ENCODE measurements at regions of chr1 and their contacts with region 1.

Region 1: DNA sequence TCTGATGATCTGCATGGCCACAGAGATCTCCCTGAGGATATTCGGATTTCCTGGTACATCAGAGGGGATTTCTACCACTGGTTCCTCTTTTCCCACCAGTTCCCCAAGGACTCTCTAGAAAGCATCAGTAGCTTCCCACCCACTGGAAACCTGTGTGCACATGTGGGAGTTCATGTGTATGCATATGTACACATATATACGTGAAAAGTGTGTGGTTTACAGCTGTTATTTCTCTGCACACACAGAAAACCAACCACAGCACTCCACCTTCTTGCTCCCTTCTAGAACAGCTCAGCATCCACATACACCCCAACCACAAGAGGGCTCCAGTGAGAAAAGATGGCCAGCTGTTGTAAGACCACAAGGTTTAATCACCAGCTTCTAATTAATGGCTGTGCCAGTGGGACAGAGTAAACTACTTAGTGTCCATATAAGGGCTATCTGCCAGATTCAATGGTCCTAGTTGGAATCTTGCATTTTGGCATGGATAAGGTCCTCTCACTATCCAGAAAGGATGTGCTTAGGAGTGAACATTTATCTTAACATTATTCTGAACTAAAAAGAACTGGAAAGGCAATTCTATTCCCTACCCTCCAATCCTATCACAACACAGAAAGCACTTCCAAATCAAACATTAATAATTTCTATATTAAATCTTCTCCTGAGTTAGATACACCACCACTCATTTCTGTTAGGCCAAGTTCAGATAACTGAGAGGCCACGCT is 24.1 kb downstream of the GPR3 start:
- DNase-seq: no peak
- H3K4me3 ChIP-seq: no peak overlapping the region
- H3K27me3 ChIP-seq: no peaks in the 10 kb centered on the region
- CTCF ChIP-seq: peak; percentile 80

Region 2: GRCh38 chr1:27220096-27220495 is 196.5 kb before region 1 on chr1:
- CTCF ChIA-PET with region 1: no interaction called
- POLR2A ChIA-PET with region 1: no interaction called
- DNase-seq: no peak
- H3K4me3 ChIP-seq: no peak overlapping the region
- H3K27me3 ChIP-seq: no peaks in the 10 kb centered on the region
- CTCF ChIP-seq: no peak

Region 3: GRCh38 chr1:27341525-27342252 is 74.9 kb before region 1 on chr1 and contains the start of gene SYTL1:
- CTCF ChIA-PET with region 1: no interaction called
- POLR2A ChIA-PET with region 1: no interaction called
- DNase-seq: no peak
- H3K4me3 ChIP-seq: no peak within 1 kb of the TSS
- H3K27me3 ChIP-seq: no peaks in the 10 kb centered on the region
- CTCF ChIP-seq: no peak
- polyA plus RNA-seq, gene SYTL1: 0.20 and 0.23 TPM in 2 replicates

Region 4: GRCh38 chr1:27357281-27358037 is 59.1 kb before region 1 on chr1:
- CTCF ChIA-PET with region 1: no interaction called
- POLR2A ChIA-PET with region 1: no interaction called
- DNase-seq: no peak
- H3K4me3 ChIP-seq: no peak overlapping the region
- H3K27me3 ChIP-seq: no peaks in the 10 kb centered on the region
- CTCF ChIP-seq: peak; percentile 91

Region 5: DNA sequence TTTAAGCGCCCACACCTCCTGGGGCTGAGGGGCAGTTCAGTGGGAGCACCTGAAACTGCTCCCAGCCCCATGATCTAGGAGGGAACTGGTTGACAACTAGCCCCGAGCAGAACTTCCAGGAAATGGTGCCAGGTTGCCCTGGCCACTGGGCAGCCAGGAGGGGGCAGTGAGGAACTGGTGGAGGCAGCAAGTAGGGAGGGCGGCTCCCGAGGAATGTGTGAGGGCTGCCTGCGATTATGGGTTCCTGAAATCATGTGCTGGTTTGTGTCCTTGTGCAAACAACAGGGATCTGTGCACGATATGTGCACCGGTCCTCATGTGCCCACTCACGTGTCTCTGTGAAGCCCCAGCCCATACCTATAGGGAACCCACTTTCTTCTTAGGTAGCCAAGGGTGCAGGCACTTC is 14.2 kb before region 1 on chr1:
- CTCF ChIA-PET with region 1: interaction called, 32 read pairs
- POLR2A ChIA-PET with region 1: no interaction called
- DNase-seq: no peak
- H3K4me3 ChIP-seq: no peak overlapping the region
- H3K27me3 ChIP-seq: no peaks in the 10 kb centered on the region
- CTCF ChIP-seq: peak; percentile 79

Region 6: DNA sequence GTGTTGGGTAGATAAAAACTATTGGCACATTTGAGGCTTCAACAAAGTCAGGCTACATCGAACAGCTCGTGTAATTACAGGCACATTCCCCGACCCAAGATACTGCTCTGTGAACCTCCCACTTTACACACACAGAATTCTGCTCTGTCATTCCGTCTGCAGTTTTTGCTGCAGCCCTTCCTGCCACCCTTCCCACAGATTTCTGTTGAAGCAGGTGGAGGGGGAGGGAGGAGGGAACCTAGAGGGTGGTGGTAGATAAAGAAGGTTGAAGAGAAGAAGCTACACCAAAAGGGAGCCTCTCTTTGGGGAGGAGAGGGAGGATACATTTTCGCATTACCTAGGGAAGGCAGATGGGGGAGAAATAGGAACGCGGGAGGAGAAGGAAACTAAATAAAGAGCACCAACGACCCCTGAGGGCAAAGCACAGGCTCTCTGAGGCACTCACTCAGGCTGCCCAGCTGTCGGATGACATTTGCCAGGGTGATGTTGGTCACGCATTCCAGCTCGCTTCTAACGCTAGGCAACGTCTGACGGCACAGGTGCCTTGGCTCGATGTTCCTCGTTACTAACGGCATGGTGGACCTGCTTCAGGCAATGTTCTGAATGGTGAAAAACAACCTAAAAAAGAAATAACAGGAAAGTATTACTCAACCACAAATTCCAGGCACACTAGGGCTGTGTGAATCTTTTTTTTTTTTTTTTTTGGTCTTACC is 11.9 kb after region 1 on chr1:
- CTCF ChIA-PET with region 1: interaction called, 10 read pairs
- POLR2A ChIA-PET with region 1: no interaction called
- DNase-seq: no peak
- H3K4me3 ChIP-seq: no peak overlapping the region
- H3K27me3 ChIP-seq: no peaks in the 10 kb centered on the region
- CTCF ChIP-seq: no peak

Region 7: GRCh38 chr1:28280501-28280900 is 864.0 kb after region 1 on chr1:
- CTCF ChIA-PET with region 1: no interaction called
- POLR2A ChIA-PET with region 1: no interaction called
- DNase-seq: no peak
- H3K4me3 ChIP-seq: no peak overlapping the region
- H3K27me3 ChIP-seq: no peaks in the 10 kb centered on the region
- CTCF ChIP-seq: no peak

Measured in BJ (cell line).